ENCODE measurements at regions of chrX and their contacts with region 1.

Region 1: GRCh38 chrX:132615391-132616131 is 126.7 kb upstream of the MBNL3 start:
- ATAC-seq: peak in 3 of 8 experiments; percentile 78 to 90 (median 78)
- H3K4me3 ChIP-seq: no peak overlapping the region
- H3K27ac ChIP-seq: no peak overlapping the region
- H3K4me1 ChIP-seq: no peaks in the 10 kb centered on the region

Region 2: DNA sequence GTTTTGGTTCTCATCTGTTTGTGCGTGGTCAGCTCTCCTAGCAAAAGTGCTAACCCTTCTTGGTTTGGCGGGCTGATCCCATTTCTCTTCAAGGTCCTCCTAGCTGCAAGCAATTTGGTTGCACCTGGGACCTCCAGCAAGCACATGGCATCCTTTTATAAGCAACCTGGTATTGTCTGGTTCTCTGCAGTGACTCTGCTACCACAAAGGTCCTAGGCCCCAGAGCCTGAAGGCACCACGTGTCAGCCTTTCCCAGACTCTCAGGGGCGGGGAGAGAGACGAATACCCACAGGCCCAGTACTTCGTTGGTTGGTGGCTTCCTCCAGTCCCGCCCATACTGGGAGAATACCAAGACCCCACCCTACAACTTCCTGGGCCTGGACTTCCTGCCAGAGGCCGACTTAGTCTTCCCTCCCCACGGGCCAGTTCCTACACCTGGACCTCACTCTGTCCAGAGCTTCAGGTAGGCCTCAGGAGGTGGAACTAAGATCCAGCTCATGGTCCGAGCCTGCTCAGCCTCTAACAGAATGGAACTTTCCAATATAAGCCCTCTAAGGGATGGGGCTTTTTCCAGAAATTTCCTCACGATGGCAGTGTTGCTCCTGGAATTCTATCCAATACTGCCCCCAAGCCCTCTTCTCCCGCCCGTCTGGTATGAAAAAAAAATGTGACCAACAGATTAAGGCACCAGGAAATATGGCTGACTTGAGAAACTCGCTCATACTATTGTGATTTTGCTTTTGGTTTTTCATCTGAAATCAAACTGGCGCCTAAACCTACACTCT is 785.0 kb before region 1 on chrX:
- in situ Hi-C with region 1: loop called in 1 of 9 experiments (anchors 25 kb)
- ATAC-seq: peak; percentile 25 to 95 (median 92)
- H3K4me3 ChIP-seq: peak overlapping the region; percentile 13 to 37 (median 33)
- H3K27ac ChIP-seq: peak overlapping the region in 1 of 2 donors; percentile 47
- H3K4me1 ChIP-seq: peaks cover 0 to 5% of the 10 kb centered on the region in 2 donors

Region 3: GRCh38 chrX:131854581-131854980 is 761.0 kb before region 1 on chrX:
- in situ Hi-C with region 1: loop called in 2 of 9 experiments (anchors 25 kb)
- ATAC-seq: peak in 1 of 8 experiments; percentile 19
- H3K4me3 ChIP-seq: no peak overlapping the region
- H3K27ac ChIP-seq: no peak overlapping the region
- H3K4me1 ChIP-seq: no peaks in the 10 kb centered on the region

Region 4: GRCh38 chrX:132092439-132093065 is 523.0 kb before region 1 on chrX:
- in situ Hi-C with region 1: loop called in 1 of 9 experiments (anchors 25 kb)
- ATAC-seq: peak in 6 of 8 experiments; percentile 22 to 81 (median 59)
- H3K4me3 ChIP-seq: no peak overlapping the region
- H3K27ac ChIP-seq: no peak overlapping the region
- H3K4me1 ChIP-seq: no peaks in the 10 kb centered on the region

Region 5: GRCh38 chrX:132226169-132226568 is 389.4 kb before region 1 on chrX:
- in situ Hi-C with region 1: loop called in 2 of 9 experiments (anchors 10 to 25 kb)
- ATAC-seq: no peak
- H3K4me3 ChIP-seq: no peak overlapping the region
- H3K27ac ChIP-seq: no peak overlapping the region
- H3K4me1 ChIP-seq: no peaks in the 10 kb centered on the region

Region 6: GRCh38 chrX:132292793-132293192 is 322.8 kb before region 1 on chrX:
- in situ Hi-C with region 1: loop called in 2 of 9 experiments (anchors 25 kb)
- ATAC-seq: peak; percentile 49 to 85 (median 58)
- H3K4me3 ChIP-seq: no peak overlapping the region
- H3K27ac ChIP-seq: no peak overlapping the region
- H3K4me1 ChIP-seq: no peaks in the 10 kb centered on the region